ENCODE measurements at regions of chr14 and their contacts with region 1.

Region 1: DNA sequence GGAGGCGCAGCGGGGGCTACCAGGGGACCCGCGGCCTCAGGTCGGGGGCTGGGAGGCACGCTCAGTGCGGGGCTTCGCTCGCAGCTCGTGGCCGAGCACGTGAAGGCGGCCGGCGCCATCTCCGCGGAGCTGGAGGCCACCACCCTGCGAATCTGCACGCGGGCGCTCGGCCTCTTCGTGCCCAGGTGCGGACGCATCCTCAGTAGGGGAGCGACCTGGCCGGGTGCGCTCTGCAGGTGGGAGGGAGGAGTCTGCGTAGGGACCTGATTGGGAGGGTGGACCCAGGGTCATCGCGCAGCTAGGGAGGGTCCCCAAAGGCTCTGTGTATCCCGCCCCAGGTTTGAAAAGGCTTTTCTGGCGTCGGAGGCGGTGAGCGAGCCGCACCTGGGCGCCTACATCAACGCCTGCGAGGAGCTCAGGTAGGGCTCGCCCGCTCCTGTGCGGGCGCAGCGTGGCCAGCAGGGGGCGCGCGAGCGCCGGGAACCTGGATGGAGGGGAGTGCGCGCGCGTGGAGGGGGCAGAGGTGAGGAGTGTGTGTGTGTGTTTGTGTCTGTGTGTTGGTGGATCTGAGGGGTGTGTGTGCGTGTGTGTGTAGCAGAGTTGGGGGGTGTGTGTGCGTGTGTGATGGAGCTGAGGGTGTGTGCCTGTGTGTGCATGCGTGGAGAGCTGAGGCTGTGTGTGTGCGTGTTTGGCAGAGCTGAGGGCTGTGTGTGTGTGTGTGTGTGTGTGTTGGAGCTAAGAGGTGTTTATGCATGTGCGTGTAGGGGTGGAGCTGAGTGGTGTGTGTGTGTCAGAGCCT is 10.3 kb downstream of the EXOC3L4 start:
- DNase-seq: peak; percentile 32 to 85
- H3K4me3 ChIP-seq: no peak overlapping the region
- H3K4me1 ChIP-seq: no peaks in the 10 kb centered on the region
- H3K27me3 ChIP-seq: peaks cover 21% of the 10 kb centered on the region

Region 2: DNA sequence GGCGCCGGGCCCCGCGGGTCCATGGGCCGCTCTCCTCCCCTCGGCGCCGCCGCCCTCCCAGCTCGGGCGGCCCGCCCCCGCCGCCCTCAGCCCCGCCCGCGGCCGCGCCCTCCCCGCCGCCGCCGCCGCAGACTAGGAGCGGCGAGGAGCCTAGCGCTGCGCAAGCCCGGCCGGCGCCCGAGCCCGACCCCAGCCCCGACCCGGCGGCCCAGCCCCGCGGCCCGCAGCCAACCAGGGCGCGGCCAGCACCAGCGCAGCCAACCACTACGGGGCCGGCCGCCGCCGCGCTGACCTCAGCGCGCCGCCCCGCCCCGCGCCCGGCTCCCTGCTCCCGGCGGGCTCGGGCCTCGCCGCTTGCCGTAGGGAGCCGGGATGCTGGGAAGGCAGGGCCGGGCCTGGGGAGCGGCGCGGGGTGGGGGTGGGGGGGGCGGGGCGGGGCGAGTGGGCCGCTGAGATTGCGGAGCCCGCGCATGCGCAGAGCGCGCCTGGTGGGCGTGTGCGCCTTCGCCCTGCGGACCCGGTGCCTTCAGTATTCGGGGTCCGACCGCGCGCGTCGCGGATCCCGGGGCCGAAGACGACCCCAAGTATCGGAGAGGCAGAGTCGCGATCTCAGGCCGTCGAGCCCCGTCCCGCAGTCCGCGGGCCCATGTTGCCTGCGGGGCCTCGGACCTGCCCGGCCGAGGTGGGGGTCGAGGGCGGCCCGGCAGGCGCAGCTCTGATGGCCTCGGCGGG is 47.3 kb before region 1 on chr14 and contains the start of gene CDC42BPB:
- in situ Hi-C with region 1: no loop called
- DNase-seq: peak; percentile 88 to 90
- H3K4me3 ChIP-seq: peak within 1 kb of the TSS; percentile 70
- H3K4me1 ChIP-seq: peaks cover 18% of the 10 kb centered on the region
- H3K27me3 ChIP-seq: no peaks in the 10 kb centered on the region

Region 3: DNA sequence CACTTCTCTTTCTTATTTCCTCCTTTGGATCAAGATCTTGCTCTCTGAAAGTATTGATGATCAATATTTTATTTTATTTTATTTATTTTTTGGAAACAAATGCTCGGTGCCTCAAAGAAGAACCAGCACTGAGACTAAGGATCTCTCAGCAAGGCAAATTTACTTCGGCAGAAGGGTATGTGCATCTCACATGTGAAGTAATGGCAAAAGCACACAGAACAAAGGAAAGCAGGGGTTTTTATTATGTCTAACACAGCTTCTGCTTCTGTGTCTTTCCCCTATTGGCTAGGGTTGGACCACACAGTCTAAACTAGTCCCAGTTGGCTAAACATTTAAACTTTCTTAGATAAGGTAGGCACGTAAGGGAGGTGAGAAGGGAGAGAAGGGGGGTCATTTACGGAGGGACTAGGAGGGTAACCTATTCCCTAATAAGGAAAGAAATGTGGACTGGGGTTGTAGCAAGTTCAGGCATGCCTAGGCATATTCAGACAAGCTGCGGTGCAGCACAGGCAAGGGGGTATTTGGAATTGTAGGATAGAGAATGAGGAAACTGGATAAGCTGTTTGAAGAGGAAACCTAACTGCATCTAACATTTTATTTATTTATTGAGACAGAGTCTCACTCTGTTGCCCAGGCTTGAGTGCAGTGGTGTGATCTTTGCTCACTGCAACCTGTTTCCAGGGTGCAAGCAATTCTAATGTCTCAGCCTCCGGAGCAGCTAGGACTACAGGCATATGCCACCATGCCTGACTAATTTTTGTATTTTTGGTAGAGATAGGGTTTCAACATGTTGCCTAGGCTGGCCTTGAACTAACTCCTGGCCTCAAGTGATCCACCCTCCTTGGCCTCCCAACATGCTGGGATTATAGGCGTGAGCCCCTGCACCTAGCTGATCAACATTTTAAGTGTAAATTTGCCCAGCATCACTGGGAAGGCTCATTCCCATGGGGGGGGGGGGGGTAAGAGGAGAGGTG is 139.2 kb after region 1 on chr14:
- in situ Hi-C with region 1: no loop called
- DNase-seq: no peak
- H3K4me3 ChIP-seq: no peak overlapping the region
- H3K4me1 ChIP-seq: no peaks in the 10 kb centered on the region
- H3K27me3 ChIP-seq: no peaks in the 10 kb centered on the region

Region 4: DNA sequence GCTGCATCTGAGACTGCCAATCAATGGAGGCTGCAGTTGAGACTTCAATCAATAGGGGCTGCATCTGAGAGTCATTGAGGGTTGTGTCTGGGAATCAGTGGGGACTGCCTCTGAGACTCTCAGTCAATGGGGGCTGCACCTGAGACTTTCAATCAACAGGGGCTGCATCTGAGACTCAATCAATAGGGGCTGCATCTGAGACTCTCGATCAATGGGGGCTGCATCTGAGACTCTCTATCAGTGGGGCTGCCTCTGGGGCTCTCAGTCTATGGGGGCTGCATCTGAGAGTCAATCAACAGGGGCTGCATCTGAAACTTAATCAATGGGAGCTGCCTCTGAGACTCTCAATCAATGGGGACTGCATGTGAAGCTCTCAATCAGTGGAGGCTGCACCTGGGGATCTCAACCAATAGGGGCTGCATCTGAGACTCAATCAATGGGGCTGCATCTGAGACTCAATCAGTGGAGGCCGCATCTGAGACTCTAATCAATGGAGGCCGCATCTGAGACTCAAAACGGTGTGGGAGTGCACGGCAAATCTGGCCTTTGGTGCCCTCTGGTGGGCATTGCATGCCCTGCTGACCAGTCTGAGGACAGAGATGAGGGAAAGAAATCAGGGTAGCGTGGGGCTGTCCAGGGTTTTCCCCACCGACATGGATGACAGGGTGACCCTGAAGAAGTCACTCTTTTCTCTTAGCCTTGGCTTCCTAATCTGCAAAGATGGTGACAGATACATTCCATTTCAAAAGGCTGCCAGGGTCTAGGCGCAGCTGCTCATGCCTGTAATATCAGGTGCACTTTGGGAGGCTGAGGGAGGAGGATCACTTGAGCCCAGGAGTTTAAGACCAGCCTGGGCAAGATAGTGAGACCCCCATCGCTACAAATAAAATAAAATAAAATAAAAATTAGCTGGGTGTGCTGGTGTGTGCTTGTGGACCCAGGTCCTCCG is 187.8 kb after region 1 on chr14:
- in situ Hi-C with region 1: loop called (anchors 5 kb)
- DNase-seq: peak; percentile 64 to 86
- H3K4me3 ChIP-seq: no peak overlapping the region
- H3K4me1 ChIP-seq: no peaks in the 10 kb centered on the region
- H3K27me3 ChIP-seq: no peaks in the 10 kb centered on the region